IMR-90 (cell line): ENCODE measurements at regions of chrX and their contacts with region 1.

Region 1: DNA sequence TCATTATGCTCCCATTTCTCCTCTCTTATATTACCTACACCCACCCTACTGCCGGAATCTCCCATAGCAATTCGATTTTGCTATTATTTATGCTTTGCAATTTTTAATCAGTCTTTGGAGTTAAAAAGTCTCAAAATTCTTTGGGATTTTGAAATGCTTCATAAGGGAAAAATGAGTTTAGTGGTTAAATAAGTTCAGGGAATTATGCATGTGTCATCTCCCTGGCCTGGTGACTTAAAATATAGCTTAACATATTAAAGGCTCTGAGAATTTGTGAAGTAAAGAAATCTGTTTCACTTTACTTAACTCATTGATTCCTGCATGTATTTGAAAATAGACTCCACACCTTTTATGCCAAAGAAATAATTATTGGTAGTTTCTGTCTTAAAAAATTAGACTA is 185.1 kb upstream of the DIPK2B start:
- DNase-seq: peak; percentile 45
- ATAC-seq: no peak
- H3K4me3 ChIP-seq: no peak overlapping the region
- H3K27ac ChIP-seq: no peak overlapping the region
- H3K4me1 ChIP-seq: peaks cover 6% of the 10 kb centered on the region
- H3K27me3 ChIP-seq: peaks cover 2% of the 10 kb centered on the region
- CTCF ChIP-seq: no peak
- POLR2A ChIP-seq: no peak
- RAD21 ChIP-seq: no peak

Region 2: GRCh38 chrX:46376246-46376885 is 990.6 kb after region 1 on chrX:
- CTCF ChIA-PET with region 1: no interaction called
- POLR2A ChIA-PET with region 1: interaction called, 13 read pairs
- dilution Hi-C with region 1: no loop called
- in situ Hi-C with region 1: no loop called
- intact Hi-C with region 1: no loop called
- DNase-seq: peak; percentile 48
- ATAC-seq: peak; percentile 83
- H3K4me3 ChIP-seq: no peak overlapping the region
- H3K27ac ChIP-seq: no peak overlapping the region
- H3K4me1 ChIP-seq: 0 out of 2 replicates have a peak, but pooled peaks cover 2% of the 10 kb centered on the region
- H3K27me3 ChIP-seq: no peaks in the 10 kb centered on the region
- CTCF ChIP-seq: peak; percentile 45
- POLR2A ChIP-seq: no peak
- RAD21 ChIP-seq: peak; percentile 55

Region 3: GRCh38 chrX:46506076-46506475 is 1120.3 kb after region 1 on chrX:
- CTCF ChIA-PET with region 1: interaction called, 10 read pairs
- POLR2A ChIA-PET with region 1: no interaction called
- dilution Hi-C with region 1: no loop called
- in situ Hi-C with region 1: no loop called
- intact Hi-C with region 1: no loop called
- DNase-seq: no peak
- ATAC-seq: no peak
- H3K4me3 ChIP-seq: no peak overlapping the region
- H3K27ac ChIP-seq: no peak overlapping the region
- H3K4me1 ChIP-seq: no peaks in the 10 kb centered on the region
- H3K27me3 ChIP-seq: no peaks in the 10 kb centered on the region
- CTCF ChIP-seq: no peak
- POLR2A ChIP-seq: no peak
- RAD21 ChIP-seq: no peak